Naive thymus-derived CD4-positive, alpha-beta T cell (primary cell): ENCODE measurements at regions of chr1 and their contacts with region 1.

Region 1: GRCh38 chr1:16366722-16367257 is at the start of gene SZRD1:
- DNase-seq: peak; percentile 81 to 98 (median 96)
- ATAC-seq: peak; percentile 94
- H3K4me3 ChIP-seq: peak within 1 kb of the TSS; percentile 98
- H3K4me3 Mint-ChIP-seq: peak within 1 kb of the TSS; percentile 93 to 99 (median 96)
- H3K27ac ChIP-seq: peak within 1 kb of the TSS; percentile 99
- H3K27ac Mint-ChIP-seq: peak within 1 kb of the TSS; percentile 90 to 99 (median 97)
- H3K4me1 ChIP-seq: peaks cover 19 to 26% of the 10 kb centered on the region in 2 donors
- H3K4me1 Mint-ChIP-seq: peaks cover 15 to 43% (median 38%) of the 10 kb centered on the region in 7 donors
- H3K27me3 ChIP-seq: no peaks in the 10 kb centered on the region
- H3K27me3 Mint-ChIP-seq: no peaks in the 10 kb centered on the region
- total RNA-seq, gene SZRD1: 81.6 to 163 (median 125) TPM

Region 2: DNA sequence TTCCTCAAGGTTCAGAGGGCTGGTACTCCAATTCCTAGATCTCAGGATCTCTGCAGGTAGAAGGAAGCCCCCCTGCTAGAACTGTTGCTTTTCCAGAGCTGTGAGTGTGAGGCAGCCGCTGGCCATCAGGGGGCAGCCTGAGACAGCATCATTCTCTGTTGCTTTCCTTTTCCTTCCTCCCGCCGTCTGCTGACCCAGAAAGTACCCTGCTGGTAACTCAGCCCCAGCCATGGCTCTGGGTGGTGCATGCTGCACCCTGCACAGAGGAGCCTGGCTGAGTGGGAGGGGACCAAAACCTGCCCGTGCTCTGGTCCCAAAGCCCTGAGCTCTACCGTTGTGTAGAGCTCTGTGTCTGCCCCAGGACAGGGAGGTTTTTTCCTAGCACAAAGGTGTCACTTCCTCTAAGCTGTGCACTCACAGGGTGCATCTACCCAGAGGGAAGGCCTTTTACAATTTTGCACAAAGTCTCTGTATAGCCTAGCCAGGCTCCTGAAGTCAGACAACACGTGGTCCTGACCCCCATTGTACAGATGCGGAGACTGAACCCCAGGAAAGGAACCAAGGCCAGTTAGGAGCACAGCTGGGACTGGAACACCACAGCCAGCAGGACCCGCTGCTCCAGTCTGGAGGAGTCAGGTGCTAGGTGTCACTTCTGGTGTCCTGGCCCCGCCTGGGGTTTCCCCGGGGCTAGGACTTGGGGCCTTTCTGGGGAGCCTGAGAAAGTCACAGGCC is 287.7 kb before region 1 on chr1:
- CTCF ChIA-PET with region 1: interaction called, 6 read pairs
- POLR2A ChIA-PET with region 1: no interaction called
- intact Hi-C with region 1: loop called in 1 of 2 experiments (anchors 5 kb)
- DNase-seq: peak; percentile 52 to 80 (median 73)
- ATAC-seq: peak; percentile 91
- H3K4me3 ChIP-seq: peak overlapping the region; percentile 40
- H3K4me3 Mint-ChIP-seq: peak overlapping the region; percentile 58 to 86 (median 77)
- H3K27ac ChIP-seq: no peak overlapping the region
- H3K27ac Mint-ChIP-seq: peak overlapping the region in 6 of 9 donors; percentile 10 to 83 (median 40)
- H3K4me1 ChIP-seq: peaks cover 6% of the 10 kb centered on the region in 2 donors
- H3K4me1 Mint-ChIP-seq: peaks cover 6 to 15% (median 10%) of the 10 kb centered on the region in 7 donors
- H3K27me3 ChIP-seq: peaks cover 0 to 4% of the 10 kb centered on the region in 2 donors
- H3K27me3 Mint-ChIP-seq: peaks cover under 1 to 12% (median 5%) of the 10 kb centered on the region in 5 donors

Region 3: DNA sequence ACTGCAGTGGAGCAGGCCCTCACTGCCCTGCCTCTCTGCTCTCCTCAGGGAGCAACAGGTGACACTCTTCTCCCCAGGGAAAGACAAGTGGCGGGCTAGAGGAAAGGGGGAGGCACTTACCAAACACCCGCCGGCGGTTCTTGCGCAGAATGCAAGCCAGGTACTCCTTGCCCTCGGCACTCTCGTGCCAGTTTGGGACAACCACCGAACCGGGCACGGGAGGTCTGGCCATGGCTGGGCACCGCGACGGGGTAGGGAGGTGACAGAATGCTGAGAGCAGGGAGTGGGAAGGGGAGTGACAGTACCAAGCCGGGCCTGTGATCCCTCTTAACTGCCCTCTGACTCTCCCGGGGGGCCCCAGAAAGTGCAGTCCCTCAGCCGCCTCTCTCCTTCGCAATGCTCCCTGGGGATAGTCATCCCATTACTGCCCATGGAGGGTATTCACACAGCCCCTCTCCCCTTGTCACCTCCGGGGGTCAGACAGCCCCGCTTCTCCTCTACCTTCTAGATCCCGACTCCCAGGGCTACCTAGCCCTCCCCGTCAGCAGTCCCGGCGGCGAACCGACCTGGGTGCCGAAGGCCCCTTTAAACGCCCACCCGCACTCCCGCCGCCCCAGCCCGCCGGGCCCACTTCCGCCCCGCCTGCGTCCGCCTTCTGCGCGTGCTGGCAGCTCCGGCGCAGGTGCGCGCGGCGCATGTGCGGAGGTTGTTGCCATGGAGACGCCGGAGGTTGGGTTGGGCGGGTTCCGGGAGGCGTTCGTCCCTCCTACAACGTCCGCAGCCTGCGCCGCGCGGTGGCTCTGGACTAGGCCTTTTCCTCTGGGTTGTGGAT is 130.1 kb before region 1 on chr1 and contains the start of gene CPLANE2:
- CTCF ChIA-PET with region 1: interaction called, 9 read pairs
- POLR2A ChIA-PET with region 1: no interaction called
- intact Hi-C with region 1: loop called (anchors 1 kb)
- DNase-seq: peak; percentile 91 to 99 (median 94)
- ATAC-seq: peak; percentile 89
- H3K4me3 ChIP-seq: peak within 1 kb of the TSS; percentile 94
- H3K4me3 Mint-ChIP-seq: peak within 1 kb of the TSS; percentile 85 to 95 (median 92)
- H3K27ac ChIP-seq: peak within 1 kb of the TSS; percentile 78
- H3K27ac Mint-ChIP-seq: peak within 1 kb of the TSS; percentile 91 to 97 (median 95)
- H3K4me1 ChIP-seq: peaks cover 15 to 19% of the 10 kb centered on the region in 2 donors
- H3K4me1 Mint-ChIP-seq: peaks cover 0 to 28% (median 23%) of the 10 kb centered on the region in 7 donors
- H3K27me3 ChIP-seq: no peaks in the 10 kb centered on the region
- H3K27me3 Mint-ChIP-seq: no peaks in the 10 kb centered on the region
- total RNA-seq, gene CPLANE2: 6.6 to 11.4 (median 8.8) TPM

Region 4: DNA sequence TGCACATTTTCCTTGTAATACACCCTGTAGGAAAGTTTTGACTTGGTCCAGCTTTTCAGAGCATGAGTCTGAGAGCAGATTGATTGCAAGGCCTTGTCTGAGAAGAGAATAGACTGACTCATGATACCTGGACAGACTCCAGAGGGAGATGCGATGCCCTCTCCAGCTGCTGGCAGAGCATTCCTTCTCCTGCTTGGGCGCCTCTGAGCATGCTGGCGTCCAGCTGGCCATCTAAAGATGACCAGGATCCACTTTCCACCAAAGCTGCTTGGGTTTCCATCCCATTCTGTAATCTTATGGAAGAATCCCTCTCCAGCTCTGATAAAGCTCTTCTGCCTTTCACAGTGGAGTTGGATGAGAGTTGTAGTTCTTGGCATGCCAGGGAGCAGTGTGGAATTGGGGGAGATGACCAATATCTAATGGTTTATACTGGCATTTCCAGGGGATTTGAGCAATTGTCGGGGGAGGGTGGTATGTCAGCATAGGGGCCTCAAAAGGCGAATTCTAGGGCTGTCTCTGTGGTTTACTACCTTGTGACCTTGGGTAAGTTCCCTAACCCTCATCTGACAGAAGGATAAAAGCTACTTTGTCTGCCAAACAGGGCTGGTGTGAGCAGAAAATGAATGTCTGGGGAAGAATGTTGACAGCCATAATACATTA is 19.8 kb after region 1 on chr1:
- CTCF ChIA-PET with region 1: no interaction called
- POLR2A ChIA-PET with region 1: interaction called, 7 read pairs
- intact Hi-C with region 1: loop called in 1 of 2 experiments (anchors 1 kb)
- DNase-seq: no peak
- ATAC-seq: peak; percentile 77
- H3K4me3 ChIP-seq: no peak overlapping the region
- H3K4me3 Mint-ChIP-seq: peak overlapping the region; percentile 22 to 84 (median 76)
- H3K27ac ChIP-seq: peak overlapping the region; percentile 54
- H3K27ac Mint-ChIP-seq: peak overlapping the region; percentile 39 to 91 (median 77)
- H3K4me1 ChIP-seq: peaks cover 22 to 51% of the 10 kb centered on the region in 2 donors
- H3K4me1 Mint-ChIP-seq: peaks cover 61 to 86% (median 75%) of the 10 kb centered on the region in 7 donors
- H3K27me3 ChIP-seq: no peaks in the 10 kb centered on the region
- H3K27me3 Mint-ChIP-seq: no peaks in the 10 kb centered on the region

Region 5: GRCh38 chr1:16402742-16403141 is 36.0 kb after region 1 on chr1:
- CTCF ChIA-PET with region 1: no interaction called
- POLR2A ChIA-PET with region 1: no interaction called
- intact Hi-C with region 1: no loop called
- DNase-seq: no peak
- ATAC-seq: no peak
- H3K4me3 ChIP-seq: no peak overlapping the region
- H3K4me3 Mint-ChIP-seq: no peak overlapping the region
- H3K27ac ChIP-seq: no peak overlapping the region
- H3K27ac Mint-ChIP-seq: peak overlapping the region in 1 of 9 donors; percentile 17
- H3K4me1 ChIP-seq: no peaks in the 10 kb centered on the region
- H3K4me1 Mint-ChIP-seq: peaks cover 0 to 3% (median 0%) of the 10 kb centered on the region in 7 donors
- H3K27me3 ChIP-seq: no peaks in the 10 kb centered on the region
- H3K27me3 Mint-ChIP-seq: no peaks in the 10 kb centered on the region

Region 6: DNA sequence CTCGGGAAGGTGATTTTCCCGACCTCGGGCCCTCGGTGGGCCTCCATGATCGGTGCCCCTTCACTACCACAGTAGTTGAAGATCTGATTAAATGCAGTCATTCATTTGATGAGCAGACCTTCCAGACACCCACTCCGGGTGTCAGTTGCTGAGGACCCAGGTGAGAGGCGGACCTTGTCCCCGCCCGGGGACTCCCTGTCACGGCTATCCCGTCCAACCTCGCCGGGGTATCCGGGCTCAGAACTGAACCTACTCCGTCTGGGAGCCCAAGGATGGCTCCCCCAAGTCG is 277.3 kb after region 1 on chr1:
- CTCF ChIA-PET with region 1: no interaction called
- POLR2A ChIA-PET with region 1: no interaction called
- intact Hi-C with region 1: loop called in 1 of 2 experiments (anchors 1 kb)
- DNase-seq: no peak
- ATAC-seq: peak; percentile 43
- H3K4me3 ChIP-seq: peak overlapping the region; percentile 89
- H3K4me3 Mint-ChIP-seq: no peak overlapping the region
- H3K27ac ChIP-seq: peak overlapping the region; percentile 80
- H3K27ac Mint-ChIP-seq: no peak overlapping the region
- H3K4me1 ChIP-seq: peaks cover 21 to 27% of the 10 kb centered on the region in 2 donors
- H3K4me1 Mint-ChIP-seq: peaks cover 0 to 3% (median 0%) of the 10 kb centered on the region in 7 donors
- H3K27me3 ChIP-seq: no peaks in the 10 kb centered on the region
- H3K27me3 Mint-ChIP-seq: peaks cover 0 to 9% (median 0%) of the 10 kb centered on the region in 5 donors